ENCODE measurements at regions of chr18 and their contacts with region 1.

Region 1: GRCh38 chr18:32470713-32471633 is at the start of gene GAREM1:
- DNase-seq: peak; percentile 86
- H3K4me3 Mint-ChIP-seq: peak within 1 kb of the TSS; percentile 68
- H3K27ac Mint-ChIP-seq: no peak within 1 kb of the TSS
- H3K4me1 Mint-ChIP-seq: peaks cover 25% of the 10 kb centered on the region
- H3K27me3 Mint-ChIP-seq: peaks cover 64% of the 10 kb centered on the region
- total RNA-seq, gene GAREM1: 0.18 TPM in 1 of 2 experiments, not detected in the other

Region 2: GRCh38 chr18:32158108-32158624 is 312.8 kb before region 1 on chr18:
- CTCF ChIA-PET with region 1: interaction called, 17 read pairs
- POLR2A ChIA-PET with region 1: no interaction called
- DNase-seq: peak; percentile 76
- H3K4me3 Mint-ChIP-seq: peak overlapping the region; percentile 38
- H3K27ac Mint-ChIP-seq: no peak overlapping the region
- H3K4me1 Mint-ChIP-seq: peaks cover 7% of the 10 kb centered on the region
- H3K27me3 Mint-ChIP-seq: peaks cover 14% of the 10 kb centered on the region

Region 3: DNA sequence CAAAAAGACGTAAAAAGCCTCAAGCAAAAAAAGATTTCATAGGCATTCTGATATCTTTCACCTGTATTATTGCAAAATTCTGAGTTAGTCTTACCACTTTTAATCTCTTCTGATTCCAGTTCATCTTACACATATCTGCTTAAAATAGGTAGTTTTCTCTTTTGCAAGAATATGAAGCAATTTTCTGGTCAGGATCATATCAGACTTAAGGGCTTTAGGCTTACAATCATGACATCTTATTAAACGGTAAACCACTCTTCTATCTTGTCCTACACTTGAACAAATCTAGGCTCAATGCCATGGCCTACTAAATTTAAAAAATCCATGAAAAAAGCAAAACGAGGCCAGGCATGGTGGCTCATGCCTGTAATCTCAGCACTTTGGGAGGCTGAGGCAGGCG is 49.8 kb after region 1 on chr18:
- CTCF ChIA-PET with region 1: no interaction called
- POLR2A ChIA-PET with region 1: no interaction called
- DNase-seq: no peak
- H3K4me3 Mint-ChIP-seq: no peak overlapping the region
- H3K27ac Mint-ChIP-seq: no peak overlapping the region
- H3K4me1 Mint-ChIP-seq: no peaks in the 10 kb centered on the region
- H3K27me3 Mint-ChIP-seq: peaks cover 12% of the 10 kb centered on the region

Measured in activated CD4-positive, alpha-beta memory T cell treated with anti-CD3 and anti-CD28 coated beads, Interleukin-2, amount 10 ng/mL, durations not matched to agents 7 days and 5 days (primary cell).